ENCODE measurements at regions of chr4 and their contacts with region 1.

Region 1: DNA sequence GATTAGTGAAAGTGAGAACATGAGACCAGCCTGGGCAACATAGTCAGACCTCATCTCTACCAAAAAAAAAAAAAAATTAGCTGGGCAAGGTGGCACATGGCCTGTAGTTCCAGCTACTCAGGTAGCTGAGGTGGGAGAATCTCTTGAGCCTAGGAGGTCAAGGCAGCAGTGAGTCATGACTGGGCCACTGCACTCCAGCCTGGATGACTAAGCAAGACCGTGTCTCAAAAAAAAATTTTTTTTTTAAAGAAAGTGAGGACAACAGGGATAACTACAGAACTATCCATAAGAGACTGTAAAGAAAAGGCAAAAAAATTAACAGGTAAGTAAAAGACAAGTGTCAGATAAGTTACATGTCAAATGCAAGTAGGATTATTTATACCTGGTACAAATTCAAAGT is 13.5 kb upstream of the SPP1 start:
- DNase-seq: no peak
- ATAC-seq: no peak
- H3K4me3 Mint-ChIP-seq: no peak overlapping the region
- H3K27ac Mint-ChIP-seq: no peak overlapping the region
- H3K4me1 Mint-ChIP-seq: no peaks in the 10 kb centered on the region
- H3K27me3 Mint-ChIP-seq: peaks cover 2% of the 10 kb centered on the region
- CTCF ChIP-seq: no peak

Region 2: DNA sequence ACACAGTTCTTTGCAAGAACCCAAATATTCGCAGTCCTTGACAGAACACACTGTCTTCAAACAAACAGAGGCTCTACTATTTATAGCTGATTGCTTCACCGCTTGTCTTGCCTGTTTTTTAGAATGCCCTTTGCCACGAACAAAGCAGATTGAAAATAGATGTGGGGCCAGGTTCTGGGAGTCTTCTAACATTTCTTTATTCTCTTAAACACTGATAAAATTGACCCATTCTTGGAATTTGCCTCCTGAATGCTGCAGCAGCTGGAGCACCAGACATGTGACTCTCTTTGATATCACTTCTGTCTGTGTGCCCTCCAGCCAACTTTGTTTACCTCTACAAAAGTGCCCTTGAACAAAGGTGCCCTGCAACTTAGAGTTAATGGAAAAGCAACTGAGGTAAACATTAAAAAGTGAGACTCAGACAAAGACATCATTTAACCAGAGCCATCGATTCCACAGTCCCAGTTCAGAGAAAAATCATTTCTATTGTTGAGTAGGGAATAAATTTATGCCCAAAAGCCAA is 50.7 kb before region 1 on chr4:
- CTCF ChIA-PET with region 1: no interaction called
- POLR2A ChIA-PET with region 1: no interaction called
- intact Hi-C with region 1: no loop called
- DNase-seq: no peak
- ATAC-seq: no peak
- H3K4me3 Mint-ChIP-seq: no peak overlapping the region
- H3K27ac Mint-ChIP-seq: no peak overlapping the region
- H3K4me1 Mint-ChIP-seq: no peaks in the 10 kb centered on the region
- H3K27me3 Mint-ChIP-seq: peaks cover 6% of the 10 kb centered on the region
- CTCF ChIP-seq: no peak

Region 3: GRCh38 chr4:87973283-87974169 is 11.5 kb after region 1 on chr4:
- CTCF ChIA-PET with region 1: interaction called, 20 read pairs
- POLR2A ChIA-PET with region 1: no interaction called
- intact Hi-C with region 1: no loop called
- DNase-seq: peak; percentile 56
- ATAC-seq: peak; percentile 77
- H3K4me3 Mint-ChIP-seq: no peak overlapping the region
- H3K27ac Mint-ChIP-seq: no peak overlapping the region
- H3K4me1 Mint-ChIP-seq: peaks cover 7% of the 10 kb centered on the region
- H3K27me3 Mint-ChIP-seq: peaks cover 32% of the 10 kb centered on the region
- CTCF ChIP-seq: peak; percentile 80

Measured in activated CD8-positive, alpha-beta T cell treated with anti-CD3 and anti-CD28 coated beads for 36 hours (primary cell).